Panc1 (cell line): ENCODE measurements at regions of chr6 and their contacts with region 1.

Region 1: GRCh38 chr6:152948150-152948768 is 34.6 kb downstream of the FBXO5 start:
- DNase-seq: peak; percentile 20
- ATAC-seq: peak; percentile 92
- H3K4me3 ChIP-seq: peak overlapping the region in 1 of 2 experiments; percentile 29; a peak in 1 of 4 replicates
- H3K27ac ChIP-seq: no peak overlapping the region
- H3K4me1 ChIP-seq: peaks cover 4% of the 10 kb centered on the region; the same call in 1 of the 2 replicates
- H3K27me3 ChIP-seq: 0 out of 2 replicates have a peak, but pooled peaks cover 4% of the 10 kb centered on the region
- CTCF ChIP-seq: peak; percentile 78

Region 2: DNA sequence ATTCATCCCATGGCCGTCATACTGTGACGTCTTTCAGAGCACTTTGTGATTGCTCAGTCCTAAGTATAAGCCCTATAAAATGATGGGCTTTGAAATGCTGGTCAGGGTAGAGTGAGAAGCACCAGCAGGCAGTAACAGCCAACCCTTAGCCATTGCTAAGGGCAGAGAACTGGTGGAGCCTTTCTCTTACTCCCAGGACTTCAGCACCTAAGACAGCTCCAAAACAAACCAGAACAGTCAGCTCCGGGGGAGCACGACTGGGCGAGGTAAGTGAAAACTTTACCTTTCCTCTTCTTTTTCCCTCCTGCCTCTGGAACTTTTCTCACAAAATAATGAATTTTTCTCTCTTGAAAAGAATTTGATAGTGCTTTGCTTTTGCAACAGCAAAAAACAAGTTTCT is 197.6 kb before region 1 on chr6 and contains the start of gene VIP:
- CTCF ChIA-PET with region 1: interaction called, 14 read pairs
- POLR2A ChIA-PET with region 1: no interaction called
- in situ Hi-C with region 1: no loop called
- intact Hi-C with region 1: loop called (anchors 1 kb)
- DNase-seq: no peak
- ATAC-seq: no peak
- H3K4me3 ChIP-seq: no peak within 1 kb of the TSS
- H3K27ac ChIP-seq: no peak within 1 kb of the TSS
- H3K4me1 ChIP-seq: no peaks in the 10 kb centered on the region
- H3K27me3 ChIP-seq: no peaks in the 10 kb centered on the region
- CTCF ChIP-seq: no peak
- total RNA-seq, gene VIP: not detected